CD14-positive monocyte (primary cell): ENCODE measurements at regions of chr1 and their contacts with region 1.

Region 1: GRCh38 chr1:89271341-89272015 is 1.2 kb downstream of the GBP5 start:
- DNase-seq: peak; percentile 43 to 61 (median 59)
- H3K4me3 ChIP-seq: peak overlapping the region; percentile 58 to 94 (median 77)
- H3K4me3 Mint-ChIP-seq: peak overlapping the region; percentile 93 to 98
- H3K27ac ChIP-seq: peak overlapping the region in 1 of 2 donors; percentile 84
- H3K27ac Mint-ChIP-seq: peak overlapping the region in 6 of 7 donors; percentile 23 to 97 (median 71)
- H3K4me1 ChIP-seq: peaks cover 38 to 58% of the 10 kb centered on the region in 2 donors
- H3K4me1 Mint-ChIP-seq: peaks cover 61% of the 10 kb centered on the region
- H3K27me3 ChIP-seq: no peaks in the 10 kb centered on the region
- H3K27me3 Mint-ChIP-seq: no peaks in the 10 kb centered on the region
- CTCF ChIP-seq: no peak

Region 2: GRCh38 chr1:89125913-89126580 is 145.4 kb before region 1 on chr1 and contains the start of gene GBP2:
- intact Hi-C with region 1: loop called in 1 of 2 experiments (anchors 2 kb)
- DNase-seq: peak; percentile 58 to 92 (median 88)
- H3K4me3 ChIP-seq: peak within 1 kb of the TSS; percentile 49 to 100 (median 98)
- H3K4me3 Mint-ChIP-seq: peak within 1 kb of the TSS; percentile 99 to 100
- H3K27ac ChIP-seq: peak within 1 kb of the TSS; percentile 62 to 97
- H3K27ac Mint-ChIP-seq: peak within 1 kb of the TSS; percentile 94 to 99 (median 99)
- H3K4me1 ChIP-seq: peaks cover 50 to 74% of the 10 kb centered on the region in 2 donors
- H3K4me1 Mint-ChIP-seq: peaks cover 70% of the 10 kb centered on the region
- H3K27me3 ChIP-seq: no peaks in the 10 kb centered on the region
- H3K27me3 Mint-ChIP-seq: peaks cover 0 to 1% (median 0%) of the 10 kb centered on the region in 3 donors
- CTCF ChIP-seq: no peak
- polyA plus RNA-seq, gene GBP2: 46.1 to 83.9 (median 74.1) TPM